AG04450 (cell line): ENCODE measurements at regions of chrX and their contacts with region 1.

Region 1: GRCh38 chrX:104195489-104196084 is 29.3 kb downstream of the FAM199X start:
- DNase-seq: no peak
- H3K4me3 ChIP-seq: no peak overlapping the region
- H3K27ac ChIP-seq: no peak overlapping the region
- H3K27me3 ChIP-seq: no peaks in the 10 kb centered on the region
- CTCF ChIP-seq: peak; percentile 64

Region 2: DNA sequence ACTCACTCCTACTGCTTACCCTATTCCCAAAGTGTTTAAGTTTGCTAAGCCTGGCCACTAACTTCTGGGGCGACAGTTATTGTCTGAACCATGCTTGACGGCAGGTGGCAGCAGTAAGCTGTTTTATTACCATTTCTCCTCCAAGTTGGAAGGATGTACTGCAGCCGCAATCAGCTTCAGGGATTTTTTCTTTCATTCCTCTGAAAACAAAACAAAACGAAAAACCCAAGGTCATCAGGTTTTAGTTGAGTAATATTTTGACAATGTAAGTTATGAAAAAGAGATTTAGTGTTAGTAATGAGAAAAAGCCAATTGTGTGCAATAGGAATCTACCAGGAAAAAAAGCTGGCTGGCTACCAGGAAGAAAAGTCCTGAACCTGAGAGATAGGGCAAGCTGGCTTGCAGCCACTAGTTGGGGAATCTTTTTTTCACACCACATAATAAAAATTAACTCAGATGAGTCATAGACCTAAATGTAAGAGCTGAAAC is 350.4 kb before region 1 on chrX:
- CTCF ChIA-PET with region 1: interaction called, 11 read pairs
- POLR2A ChIA-PET with region 1: no interaction called
- DNase-seq: peak; percentile 38
- H3K4me3 ChIP-seq: no peak overlapping the region
- H3K27ac ChIP-seq: no peak overlapping the region
- H3K27me3 ChIP-seq: no peaks in the 10 kb centered on the region
- CTCF ChIP-seq: peak; percentile 61

Region 3: GRCh38 chrX:104165894-104166737 is 29.5 kb before region 1 on chrX and contains the start of gene FAM199X:
- CTCF ChIA-PET with region 1: interaction called, 24 read pairs
- POLR2A ChIA-PET with region 1: no interaction called
- DNase-seq: peak; percentile 45
- H3K4me3 ChIP-seq: peak within 1 kb of the TSS; percentile 85
- H3K27ac ChIP-seq: peak within 1 kb of the TSS; percentile 31
- H3K27me3 ChIP-seq: no peaks in the 10 kb centered on the region
- CTCF ChIP-seq: peak; percentile 60
- polyA plus RNA-seq, gene FAM199X: 6.0 and 7.1 TPM in 2 replicates

Region 4: DNA sequence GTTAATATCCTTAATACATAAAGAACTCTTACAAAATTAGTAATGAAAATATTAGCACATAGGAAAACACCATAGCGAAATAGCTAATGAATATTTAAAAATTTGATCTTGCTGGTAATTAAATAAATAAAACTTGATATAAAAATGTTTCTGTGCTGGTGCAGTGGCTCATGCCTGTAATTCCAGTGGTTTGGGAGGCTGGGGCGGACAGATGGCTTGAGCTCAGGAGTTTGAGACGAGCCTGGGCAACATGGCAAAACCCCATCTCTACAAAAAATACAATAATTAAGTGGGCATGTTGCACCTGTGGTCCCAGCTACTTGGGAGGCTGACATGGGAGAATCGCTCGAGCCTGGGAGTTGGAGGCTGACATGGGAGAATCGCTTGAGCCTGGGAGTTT is 21.7 kb before region 1 on chrX:
- CTCF ChIA-PET with region 1: interaction called, 17 read pairs
- POLR2A ChIA-PET with region 1: no interaction called
- DNase-seq: no peak
- H3K4me3 ChIP-seq: no peak overlapping the region
- H3K27ac ChIP-seq: no peak overlapping the region
- H3K27me3 ChIP-seq: no peaks in the 10 kb centered on the region
- CTCF ChIP-seq: no peak

Region 5: GRCh38 chrX:104183685-104184084 is 11.9 kb before region 1 on chrX:
- CTCF ChIA-PET with region 1: interaction called, 17 read pairs
- POLR2A ChIA-PET with region 1: no interaction called
- DNase-seq: no peak
- H3K4me3 ChIP-seq: no peak overlapping the region
- H3K27ac ChIP-seq: no peak overlapping the region
- H3K27me3 ChIP-seq: no peaks in the 10 kb centered on the region
- CTCF ChIP-seq: no peak

Region 6: GRCh38 chrX:104211187-104211586 is 15.6 kb after region 1 on chrX:
- CTCF ChIA-PET with region 1: interaction called, 10 read pairs
- POLR2A ChIA-PET with region 1: no interaction called
- DNase-seq: no peak
- H3K4me3 ChIP-seq: no peak overlapping the region
- H3K27ac ChIP-seq: no peak overlapping the region
- H3K27me3 ChIP-seq: no peaks in the 10 kb centered on the region
- CTCF ChIP-seq: no peak

Region 7: GRCh38 chrX:104270920-104271512 is 75.4 kb after region 1 on chrX:
- CTCF ChIA-PET with region 1: interaction called, 30 read pairs
- POLR2A ChIA-PET with region 1: no interaction called
- DNase-seq: no peak
- H3K4me3 ChIP-seq: peak overlapping the region; percentile 42
- H3K27ac ChIP-seq: no peak overlapping the region
- H3K27me3 ChIP-seq: peaks cover 6% of the 10 kb centered on the region
- CTCF ChIP-seq: peak; percentile 66

Region 8: GRCh38 chrX:104370089-104370488 is 174.5 kb after region 1 on chrX:
- CTCF ChIA-PET with region 1: no interaction called
- POLR2A ChIA-PET with region 1: no interaction called
- DNase-seq: no peak
- H3K4me3 ChIP-seq: no peak overlapping the region
- H3K27ac ChIP-seq: no peak overlapping the region
- H3K27me3 ChIP-seq: no peaks in the 10 kb centered on the region
- CTCF ChIP-seq: no peak